H1 (cell line): ENCODE measurements at regions of chr5 and their contacts with region 1.

Region 1: DNA sequence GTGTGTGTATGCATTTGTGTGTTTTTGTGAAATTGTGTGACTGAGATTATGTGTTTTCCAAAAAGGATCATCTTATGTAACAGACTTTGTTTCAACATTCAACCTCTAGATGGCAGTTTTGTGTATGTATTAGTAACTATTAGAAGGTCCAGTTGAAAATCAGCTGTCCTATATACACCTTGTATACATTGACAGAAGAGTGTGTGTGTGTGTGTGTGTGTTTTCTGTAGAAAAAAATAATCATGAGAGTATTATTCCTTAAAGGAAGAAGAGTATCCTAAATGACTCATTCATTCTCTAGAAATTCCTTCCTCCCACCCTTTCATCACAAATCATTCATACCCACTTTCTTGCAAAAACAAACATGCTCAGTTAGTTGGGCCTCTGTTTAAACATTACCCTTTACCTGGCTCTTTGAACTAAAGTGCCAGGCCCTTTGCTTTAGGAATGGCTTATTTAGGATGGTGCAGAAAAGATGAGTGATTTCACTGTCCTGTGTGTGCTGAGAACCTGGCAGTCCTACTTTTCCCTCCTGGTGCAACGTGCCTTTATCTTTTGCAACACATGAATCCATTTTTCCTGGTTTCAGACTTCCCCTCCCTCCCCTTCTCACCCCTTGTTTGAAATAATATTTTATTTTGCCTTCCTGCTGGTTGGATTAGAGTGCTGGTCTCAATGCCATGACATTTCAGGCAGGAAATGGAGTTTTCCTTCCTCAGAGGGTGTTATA is 152.2 kb downstream of the ARHGAP26 start:
- DNase-seq: no peak
- H3K4me3 ChIP-seq: no peak overlapping the region
- H3K27ac ChIP-seq: no peak overlapping the region
- H3K4me1 ChIP-seq: no peaks in the 10 kb centered on the region
- H3K27me3 ChIP-seq: no peaks in the 10 kb centered on the region
- CTCF ChIP-seq: peak in 1 of 3 experiments; percentile 29; a peak in 2 of 4 replicates
- EP300 ChIP-seq: no peak
- POLR2A ChIP-seq: no peak
- RAD21 ChIP-seq: peak in 1 of 2 experiments; percentile 42; a peak in 2 of 4 replicates

Region 2: GRCh38 chr5:142872795-142873194 is 49.6 kb before region 1 on chr5:
- CTCF ChIA-PET with region 1: no interaction called
- POLR2A ChIA-PET with region 1: no interaction called
- DNase-seq: no peak
- H3K4me3 ChIP-seq: no peak overlapping the region
- H3K27ac ChIP-seq: no peak overlapping the region
- H3K4me1 ChIP-seq: peaks cover 0 to 3% (median 2%) of the 10 kb centered on the region in 4 experiments; a peak in 4 of 7 replicates
- H3K27me3 ChIP-seq: no peaks in the 10 kb centered on the region
- CTCF ChIP-seq: no peak
- EP300 ChIP-seq: no peak
- POLR2A ChIP-seq: no peak
- RAD21 ChIP-seq: no peak

Region 3: DNA sequence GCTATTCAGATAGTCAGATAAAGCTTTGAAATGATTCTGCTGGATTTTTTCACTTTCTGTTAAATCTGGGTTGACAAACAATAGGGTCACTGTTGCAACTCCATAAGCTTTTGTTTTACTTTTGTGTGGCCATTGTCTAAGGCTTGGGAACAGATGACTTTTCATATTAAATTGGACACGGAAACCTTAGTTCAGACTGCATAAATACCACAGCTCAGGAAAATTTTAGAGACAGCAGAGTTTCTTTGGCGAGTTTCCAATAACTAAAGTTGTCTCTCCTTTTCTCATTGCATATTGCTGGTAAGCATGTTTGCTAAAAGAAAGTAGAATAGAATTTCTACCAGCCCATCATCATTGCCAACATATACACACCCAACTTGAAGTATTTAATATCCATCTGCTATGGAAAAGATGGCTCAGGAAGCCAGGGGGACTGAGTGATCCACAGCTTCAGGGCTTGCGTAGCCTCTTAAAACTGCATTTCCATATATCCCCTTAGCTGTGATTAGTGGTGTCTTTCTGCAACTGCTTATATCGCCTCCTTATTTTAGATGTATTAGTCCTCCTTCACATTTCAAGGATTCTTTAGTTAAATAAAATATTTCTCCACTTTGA is 16.0 kb after region 1 on chr5:
- CTCF ChIA-PET with region 1: interaction called, 15 read pairs
- POLR2A ChIA-PET with region 1: no interaction called
- DNase-seq: no peak
- H3K4me3 ChIP-seq: no peak overlapping the region
- H3K27ac ChIP-seq: no peak overlapping the region
- H3K4me1 ChIP-seq: no peaks in the 10 kb centered on the region
- H3K27me3 ChIP-seq: no peaks in the 10 kb centered on the region
- CTCF ChIP-seq: no peak
- EP300 ChIP-seq: no peak
- POLR2A ChIP-seq: no peak
- RAD21 ChIP-seq: no peak

Region 4: DNA sequence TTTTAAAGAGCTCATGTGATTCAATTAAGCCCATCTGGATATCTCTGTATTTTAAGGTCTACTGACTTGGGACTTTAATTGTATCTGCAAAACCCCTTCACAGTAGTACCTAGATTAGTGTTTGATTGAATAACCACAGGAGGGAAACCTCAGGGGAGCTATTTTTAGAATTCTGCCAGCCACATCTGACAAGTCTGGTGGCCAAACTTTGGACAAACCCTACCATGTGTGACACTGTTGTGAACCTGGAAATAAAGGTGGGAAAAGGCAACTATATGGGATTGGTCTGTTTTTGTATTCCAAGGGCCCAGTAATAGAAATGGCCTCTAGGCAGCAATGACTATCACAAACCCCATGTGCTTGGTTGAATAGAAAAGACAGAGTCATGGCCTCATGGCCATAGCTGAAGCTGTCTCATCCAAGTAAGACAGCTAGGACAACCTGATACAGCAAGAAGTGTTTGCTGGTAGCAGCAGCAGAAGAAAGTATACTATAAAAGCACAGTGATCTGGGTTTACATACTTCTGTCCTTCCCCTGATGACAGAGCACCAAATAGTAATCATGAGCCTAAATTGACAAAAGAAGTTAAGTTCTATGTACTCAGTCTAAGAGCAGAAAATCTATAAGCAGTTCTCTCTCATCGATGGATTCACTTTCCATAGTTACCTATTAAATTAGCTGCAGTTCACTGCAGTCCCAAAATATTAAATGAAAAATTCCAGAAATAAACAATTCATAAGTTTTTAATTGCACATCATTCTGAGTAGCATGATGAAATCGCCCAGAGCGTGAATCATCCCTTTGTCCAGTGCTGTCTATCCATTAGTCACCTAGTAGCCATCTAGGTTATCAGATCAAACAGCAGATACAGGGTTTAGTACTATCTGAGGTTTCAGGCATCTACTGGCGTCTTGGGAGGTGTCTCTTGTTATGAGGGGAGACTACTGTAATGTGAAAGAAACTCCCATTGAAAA is 37.6 kb after region 1 on chr5:
- CTCF ChIA-PET with region 1: interaction called, 17 read pairs
- POLR2A ChIA-PET with region 1: no interaction called
- DNase-seq: no peak
- H3K4me3 ChIP-seq: no peak overlapping the region
- H3K27ac ChIP-seq: no peak overlapping the region
- H3K4me1 ChIP-seq: no peaks in the 10 kb centered on the region
- H3K27me3 ChIP-seq: no peaks in the 10 kb centered on the region
- CTCF ChIP-seq: no peak
- EP300 ChIP-seq: no peak
- POLR2A ChIP-seq: no peak
- RAD21 ChIP-seq: no peak

Region 5: GRCh38 chr5:142966121-142966420 is 43.7 kb after region 1 on chr5:
- CTCF ChIA-PET with region 1: interaction called, 10 read pairs
- POLR2A ChIA-PET with region 1: no interaction called
- DNase-seq: no peak
- H3K4me3 ChIP-seq: no peak overlapping the region
- H3K27ac ChIP-seq: no peak overlapping the region
- H3K4me1 ChIP-seq: no peaks in the 10 kb centered on the region
- H3K27me3 ChIP-seq: no peaks in the 10 kb centered on the region
- CTCF ChIP-seq: no peak
- EP300 ChIP-seq: no peak
- POLR2A ChIP-seq: no peak
- RAD21 ChIP-seq: no peak

Region 6: DNA sequence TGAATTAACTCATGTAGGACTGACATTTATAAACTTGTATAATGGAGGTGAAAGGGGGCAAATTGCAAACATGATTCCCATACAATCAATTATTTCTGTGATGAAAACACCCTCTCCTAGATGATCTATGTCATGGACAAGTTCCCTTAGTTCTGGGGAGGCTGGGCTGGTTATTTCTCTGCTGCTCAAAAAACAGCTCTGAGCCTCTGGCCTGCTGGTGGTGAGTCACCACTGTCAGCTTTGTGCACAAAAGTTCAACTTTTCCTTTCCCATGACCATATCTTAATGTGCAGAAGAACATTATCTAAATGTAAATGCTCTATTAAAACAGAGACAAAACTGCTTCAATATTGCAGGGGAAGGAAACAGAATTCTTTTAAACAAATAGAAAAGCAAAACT is 974.6 kb after region 1 on chr5:
- CTCF ChIA-PET with region 1: no interaction called
- POLR2A ChIA-PET with region 1: no interaction called
- DNase-seq: no peak
- H3K4me3 ChIP-seq: no peak overlapping the region
- H3K27ac ChIP-seq: no peak overlapping the region
- H3K4me1 ChIP-seq: peaks cover 0 to 3% (median under 1%) of the 10 kb centered on the region in 4 experiments; a peak in 2 of 7 replicates
- H3K27me3 ChIP-seq: no peaks in the 10 kb centered on the region
- CTCF ChIP-seq: no peak
- EP300 ChIP-seq: no peak
- POLR2A ChIP-seq: no peak
- RAD21 ChIP-seq: no peak